Common myeloid progenitor, CD34-positive (primary cell): ENCODE measurements at regions of chr3 and their contacts with region 1.

Region 1: GRCh38 chr3:64533617-64534317 is 154.0 kb downstream of the ADAMTS9 start:
- DNase-seq: peak; percentile 76 to 84 (median 83)
- H3K4me3 ChIP-seq: peak overlapping the region in 1 of 7 experiments; percentile 31
- H3K27ac ChIP-seq: no peak overlapping the region
- H3K4me1 ChIP-seq: peaks cover 0 to 2% (median 0%) of the 10 kb centered on the region in 4 experiments
- H3K27me3 ChIP-seq: peaks cover 0 to 9% (median 2%) of the 10 kb centered on the region in 5 experiments

Region 2: GRCh38 chr3:64268926-64269325 is 264.8 kb before region 1 on chr3:
- CTCF ChIA-PET with region 1: no interaction called
- POLR2A ChIA-PET with region 1: no interaction called
- DNase-seq: no peak
- H3K4me3 ChIP-seq: no peak overlapping the region
- H3K27ac ChIP-seq: no peak overlapping the region
- H3K4me1 ChIP-seq: no peaks in the 10 kb centered on the region
- H3K27me3 ChIP-seq: peaks cover 10 to 50% (median 23%) of the 10 kb centered on the region in 5 experiments

Region 3: GRCh38 chr3:65412588-65412987 is 878.8 kb after region 1 on chr3:
- CTCF ChIA-PET with region 1: interaction called, 12 read pairs
- POLR2A ChIA-PET with region 1: no interaction called
- DNase-seq: peak in 2 of 3 donors; percentile 1 to 2
- H3K4me3 ChIP-seq: no peak overlapping the region
- H3K27ac ChIP-seq: no peak overlapping the region
- H3K4me1 ChIP-seq: no peaks in the 10 kb centered on the region
- H3K27me3 ChIP-seq: peaks cover 0 to 3% (median 2%) of the 10 kb centered on the region in 5 experiments

Region 4: DNA sequence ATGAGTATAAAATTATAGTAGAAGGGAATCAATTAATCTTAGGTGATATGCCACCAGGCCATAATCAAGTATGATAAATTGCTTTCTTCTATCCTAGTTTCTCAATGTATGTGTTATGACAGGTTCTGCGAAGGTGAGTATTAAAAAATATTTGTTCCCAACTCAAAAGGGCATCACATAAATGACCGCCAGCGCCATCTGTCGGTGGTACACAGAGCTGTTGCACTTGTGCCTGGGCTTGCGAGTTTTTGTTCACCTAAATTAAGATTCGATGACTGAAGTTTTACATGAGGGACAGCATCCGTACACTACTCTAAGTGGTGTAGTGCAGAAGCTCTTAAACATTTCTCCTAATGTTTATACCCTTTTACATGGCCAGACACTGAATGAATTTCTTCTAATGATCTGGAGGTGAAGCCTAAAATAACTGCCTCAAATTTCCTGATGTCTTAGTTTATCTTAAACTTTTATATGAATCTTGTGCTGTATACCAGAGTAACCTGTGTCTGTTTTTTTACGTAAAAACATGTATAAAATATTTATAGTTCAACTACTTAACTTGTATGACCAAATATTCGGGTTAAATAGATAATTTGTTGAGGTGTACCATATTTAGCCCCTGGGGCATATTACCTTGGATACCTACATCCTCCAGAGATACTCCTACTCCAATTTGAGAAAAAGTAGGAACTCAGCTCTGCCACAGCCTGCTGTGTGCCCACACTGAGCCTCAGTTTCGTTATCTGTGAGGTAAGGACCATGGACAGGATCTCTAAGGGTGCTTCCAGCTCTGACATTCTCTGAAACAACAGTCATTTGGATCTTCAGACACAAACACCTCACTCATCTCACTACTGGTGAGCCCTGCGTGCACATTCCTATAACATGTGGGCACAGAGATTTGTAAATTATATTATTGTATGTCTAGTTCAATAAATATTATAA is 1139.4 kb after region 1 on chr3:
- CTCF ChIA-PET with region 1: interaction called, 22 read pairs
- POLR2A ChIA-PET with region 1: no interaction called
- DNase-seq: peak; percentile 17 to 52 (median 37)
- H3K4me3 ChIP-seq: no peak overlapping the region
- H3K27ac ChIP-seq: no peak overlapping the region
- H3K4me1 ChIP-seq: no peaks in the 10 kb centered on the region
- H3K27me3 ChIP-seq: peaks cover 0 to 3% (median 0%) of the 10 kb centered on the region in 5 experiments